Caco-2 (cell line): ENCODE measurements at regions of chr18 and their contacts with region 1.

Region 1: DNA sequence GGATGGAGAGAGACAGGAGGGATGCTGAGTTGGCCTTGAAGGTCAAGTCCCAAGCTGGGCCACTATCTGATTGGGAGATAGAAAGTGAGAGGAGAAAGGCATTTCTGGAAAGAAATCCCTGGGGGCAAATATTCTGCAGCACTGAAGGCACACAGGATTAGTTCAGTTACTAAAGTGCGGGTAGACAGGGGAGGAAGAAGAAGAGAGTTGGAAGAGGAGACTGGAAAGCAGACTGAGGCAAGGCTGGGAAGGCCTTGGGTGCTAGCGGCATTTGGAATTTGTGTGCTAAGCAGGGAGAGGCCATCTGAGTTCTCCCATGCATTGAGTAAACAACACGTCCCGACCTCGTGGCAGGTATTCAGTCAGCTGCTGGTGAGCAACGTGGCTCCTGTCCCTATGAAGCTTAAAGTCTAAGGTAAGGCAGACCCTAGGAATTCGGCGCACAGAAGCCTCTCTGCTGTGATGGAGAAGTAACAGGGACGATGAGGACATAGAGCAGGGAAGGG is 30.8 kb downstream of the ATP8B1 start:
- DNase-seq: peak; percentile 42 to 50
- H3K4me3 ChIP-seq: no peak overlapping the region
- H3K4me3 Mint-ChIP-seq: no peak overlapping the region
- H3K27ac Mint-ChIP-seq: peak overlapping the region; percentile 91
- H3K4me1 ChIP-seq: peaks cover 21% of the 10 kb centered on the region
- H3K4me1 Mint-ChIP-seq: peaks cover 21% of the 10 kb centered on the region
- H3K27me3 ChIP-seq: no peaks in the 10 kb centered on the region
- H3K27me3 Mint-ChIP-seq: no peaks in the 10 kb centered on the region
- CTCF ChIP-seq: no peak

Region 2: DNA sequence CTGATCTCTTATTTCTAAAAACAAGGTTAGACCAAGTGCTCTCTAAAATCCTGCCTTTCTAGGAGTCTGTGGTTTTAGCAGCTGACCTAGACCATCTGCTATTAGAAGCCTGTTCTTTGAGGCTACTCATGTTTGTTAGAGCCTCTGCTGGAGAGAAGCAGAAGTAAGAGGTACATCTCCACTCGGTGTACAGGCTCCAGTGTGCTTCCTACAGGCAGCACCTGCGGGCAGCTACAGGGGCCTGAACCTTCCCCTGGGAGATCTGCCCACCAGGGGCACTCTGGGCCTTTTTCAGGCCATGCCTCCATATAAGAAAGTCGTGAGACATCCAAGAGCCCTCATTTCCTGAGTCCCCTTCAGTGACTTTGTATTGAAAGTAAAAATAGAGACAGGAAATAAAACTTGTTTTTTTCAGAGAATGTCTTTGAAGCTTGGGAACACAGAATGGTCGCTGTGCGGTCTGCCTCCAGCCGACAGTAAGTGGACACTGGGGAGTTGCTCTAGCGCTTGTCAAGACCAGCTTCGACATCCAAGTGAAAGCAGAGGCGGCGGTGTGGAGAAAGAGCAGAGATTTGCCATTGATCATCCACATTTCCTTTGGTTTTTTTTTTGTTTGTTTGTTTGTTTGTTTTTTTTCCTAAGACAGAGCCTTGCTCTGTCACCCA is 305.5 kb before region 1 on chr18:
- CTCF ChIA-PET with region 1: no interaction called
- POLR2A ChIA-PET with region 1: no interaction called
- intact Hi-C with region 1: no loop called
- DNase-seq: peak in 1 of 2 experiments; percentile 1
- H3K4me3 ChIP-seq: no peak overlapping the region
- H3K4me3 Mint-ChIP-seq: no peak overlapping the region
- H3K27ac Mint-ChIP-seq: no peak overlapping the region
- H3K4me1 ChIP-seq: no peaks in the 10 kb centered on the region
- H3K4me1 Mint-ChIP-seq: no peaks in the 10 kb centered on the region
- H3K27me3 ChIP-seq: no peaks in the 10 kb centered on the region
- H3K27me3 Mint-ChIP-seq: no peaks in the 10 kb centered on the region
- CTCF ChIP-seq: no peak

Region 3: GRCh38 chr18:57715681-57716080 is 56.7 kb before region 1 on chr18:
- CTCF ChIA-PET with region 1: no interaction called
- POLR2A ChIA-PET with region 1: no interaction called
- intact Hi-C with region 1: loop called (anchors 2 kb)
- DNase-seq: no peak
- H3K4me3 ChIP-seq: no peak overlapping the region
- H3K4me3 Mint-ChIP-seq: peak overlapping the region; percentile 38
- H3K27ac Mint-ChIP-seq: no peak overlapping the region
- H3K4me1 ChIP-seq: peaks cover 5% of the 10 kb centered on the region
- H3K4me1 Mint-ChIP-seq: peaks cover 15% of the 10 kb centered on the region
- H3K27me3 ChIP-seq: no peaks in the 10 kb centered on the region
- H3K27me3 Mint-ChIP-seq: no peaks in the 10 kb centered on the region
- CTCF ChIP-seq: no peak

Region 4: GRCh38 chr18:57819671-57820460 is 47.5 kb after region 1 on chr18:
- CTCF ChIA-PET with region 1: no interaction called
- POLR2A ChIA-PET with region 1: no interaction called
- intact Hi-C with region 1: no loop called
- DNase-seq: no peak
- H3K4me3 ChIP-seq: no peak overlapping the region
- H3K4me3 Mint-ChIP-seq: no peak overlapping the region
- H3K27ac Mint-ChIP-seq: no peak overlapping the region
- H3K4me1 ChIP-seq: no peaks in the 10 kb centered on the region
- H3K4me1 Mint-ChIP-seq: no peaks in the 10 kb centered on the region
- H3K27me3 ChIP-seq: no peaks in the 10 kb centered on the region
- H3K27me3 Mint-ChIP-seq: no peaks in the 10 kb centered on the region
- CTCF ChIP-seq: no peak